ENCODE measurements at regions of chr14 and their contacts with region 1.

Region 1: DNA sequence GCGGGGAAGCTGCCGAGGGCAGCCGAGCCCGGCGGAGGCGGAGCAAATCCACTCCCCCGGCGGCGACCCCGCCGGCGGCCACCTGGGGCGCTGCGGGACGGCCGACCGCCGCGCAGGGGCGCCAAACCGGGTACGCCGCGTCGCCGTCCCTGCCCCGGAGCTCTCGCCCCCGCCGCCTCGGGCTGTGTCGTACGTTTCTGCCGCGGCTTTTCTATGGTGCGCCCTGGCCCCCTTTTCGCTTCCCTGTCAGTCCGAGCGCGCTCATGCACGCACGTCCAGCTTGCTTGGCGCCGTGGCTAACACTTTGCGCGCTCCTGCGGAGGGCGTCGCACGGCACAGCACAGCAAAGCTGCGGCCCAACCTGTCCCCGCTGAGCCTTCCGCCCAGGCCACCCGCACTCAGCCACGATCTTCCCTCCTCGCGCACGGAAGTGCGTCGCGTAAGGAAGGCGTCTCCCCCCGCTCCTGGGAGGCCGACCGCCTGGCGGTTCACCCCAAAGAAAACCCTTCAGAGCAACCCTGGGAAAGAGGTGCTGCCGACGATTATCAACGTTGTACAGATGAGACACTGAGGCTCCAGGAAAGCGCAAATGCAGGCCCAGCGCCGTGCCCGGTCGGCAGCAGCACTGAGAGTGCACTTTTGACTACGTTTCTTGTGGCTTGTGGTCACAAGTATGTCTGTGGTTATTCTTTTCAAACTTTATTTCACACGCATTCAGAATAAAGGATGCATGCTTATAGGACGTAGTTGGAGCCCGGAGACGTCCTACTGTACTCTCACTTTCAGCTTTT is at the start of gene HECTD1:
- DNase-seq: peak; percentile 87
- H3K27ac ChIP-seq: peak within 1 kb of the TSS; percentile 99
- CTCF ChIP-seq: peak; percentile 91

Region 2: GRCh38 chr14:31243860-31244259 is 35.9 kb after region 1 on chr14:
- CTCF ChIA-PET with region 1: no interaction called
- POLR2A ChIA-PET with region 1: no interaction called
- DNase-seq: peak; percentile 75
- H3K27ac ChIP-seq: no peak overlapping the region
- CTCF ChIP-seq: no peak

Region 3: DNA sequence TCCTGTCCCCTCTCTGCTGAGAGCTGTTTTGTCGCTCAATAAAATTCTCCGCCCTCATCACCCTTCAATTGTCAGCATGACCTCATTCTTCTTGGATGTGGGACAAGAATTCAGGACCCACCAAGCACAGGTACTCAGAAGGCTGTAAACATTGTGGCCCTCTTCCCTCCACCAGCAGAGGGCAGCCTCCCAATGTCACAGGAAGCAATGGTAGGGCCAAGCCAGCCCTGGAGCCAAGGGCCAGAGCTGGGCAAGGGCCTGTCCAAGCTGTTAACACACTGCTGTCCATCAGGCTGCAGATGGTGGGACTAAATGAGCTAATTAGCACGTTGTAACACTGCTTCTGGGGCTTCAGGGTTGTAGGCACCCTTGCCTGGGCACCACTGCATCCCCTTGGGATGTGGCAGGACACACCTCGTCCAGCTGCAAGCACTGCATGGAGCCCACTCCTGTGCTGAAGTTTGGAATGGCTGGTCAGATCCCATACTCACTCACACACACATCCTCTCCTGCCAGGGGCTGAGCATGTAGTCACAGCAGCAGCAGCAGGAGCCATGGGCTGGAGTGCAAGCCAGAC is 62.3 kb after region 1 on chr14:
- CTCF ChIA-PET with region 1: interaction called, 6 read pairs
- POLR2A ChIA-PET with region 1: interaction called, 13 read pairs
- DNase-seq: no peak
- H3K27ac ChIP-seq: no peak overlapping the region
- CTCF ChIP-seq: no peak; the same call in 1 of the 2 replicates

Region 4: GRCh38 chr14:31297701-31298344 is 89.9 kb after region 1 on chr14:
- CTCF ChIA-PET with region 1: interaction called, 11 read pairs
- POLR2A ChIA-PET with region 1: no interaction called
- DNase-seq: peak; percentile 11
- H3K27ac ChIP-seq: no peak overlapping the region
- CTCF ChIP-seq: no peak

Region 5: GRCh38 chr14:31326111-31326510 is 118.2 kb after region 1 on chr14:
- CTCF ChIA-PET with region 1: interaction called, 10 read pairs
- POLR2A ChIA-PET with region 1: no interaction called
- DNase-seq: no peak
- H3K27ac ChIP-seq: no peak overlapping the region
- CTCF ChIP-seq: peak; percentile 15; the same call in 1 of the 2 replicates